IMR-90 (cell line): ENCODE measurements at regions of chr15 and their contacts with region 1.

Region 1: DNA sequence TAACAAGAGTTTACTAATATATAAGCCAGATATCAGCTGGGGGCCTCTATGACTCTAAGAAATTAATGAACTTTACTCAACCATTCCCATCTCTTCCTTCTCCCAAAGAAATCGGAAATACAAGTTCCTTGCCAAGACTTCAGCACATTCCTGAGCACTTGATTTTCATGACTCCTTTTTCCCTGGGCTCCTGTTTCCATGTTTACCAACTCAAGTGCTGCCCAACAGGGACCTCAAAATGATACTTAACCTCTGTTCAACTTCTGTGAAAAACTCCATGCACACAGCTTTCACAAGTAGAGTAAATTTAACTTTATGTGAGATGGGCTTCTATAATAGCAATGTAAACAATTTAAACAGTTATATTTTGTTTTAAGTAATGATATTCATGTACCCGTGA is 315.8 kb upstream of the CDIN1 start:
- DNase-seq: no peak
- ATAC-seq: no peak
- H3K4me3 ChIP-seq: no peak overlapping the region
- H3K27ac ChIP-seq: no peak overlapping the region
- H3K4me1 ChIP-seq: peaks cover 2% of the 10 kb centered on the region; the same call in 1 of the 2 replicates
- H3K27me3 ChIP-seq: no peaks in the 10 kb centered on the region
- CTCF ChIP-seq: no peak
- POLR2A ChIP-seq: no peak
- RAD21 ChIP-seq: no peak

Region 2: GRCh38 chr15:36218322-36218721 is 45.3 kb before region 1 on chr15:
- CTCF ChIA-PET with region 1: no interaction called
- POLR2A ChIA-PET with region 1: no interaction called
- dilution Hi-C with region 1: no loop called
- in situ Hi-C with region 1: no loop called
- intact Hi-C with region 1: loop called (anchors 5 kb)
- DNase-seq: no peak
- ATAC-seq: no peak
- H3K4me3 ChIP-seq: no peak overlapping the region
- H3K27ac ChIP-seq: no peak overlapping the region
- H3K4me1 ChIP-seq: no peaks in the 10 kb centered on the region
- H3K27me3 ChIP-seq: no peaks in the 10 kb centered on the region
- CTCF ChIP-seq: no peak
- POLR2A ChIP-seq: no peak
- RAD21 ChIP-seq: no peak